Endothelial cell of umbilical vein (primary cell): ENCODE measurements at regions of chr5 and their contacts with region 1.

Region 1: DNA sequence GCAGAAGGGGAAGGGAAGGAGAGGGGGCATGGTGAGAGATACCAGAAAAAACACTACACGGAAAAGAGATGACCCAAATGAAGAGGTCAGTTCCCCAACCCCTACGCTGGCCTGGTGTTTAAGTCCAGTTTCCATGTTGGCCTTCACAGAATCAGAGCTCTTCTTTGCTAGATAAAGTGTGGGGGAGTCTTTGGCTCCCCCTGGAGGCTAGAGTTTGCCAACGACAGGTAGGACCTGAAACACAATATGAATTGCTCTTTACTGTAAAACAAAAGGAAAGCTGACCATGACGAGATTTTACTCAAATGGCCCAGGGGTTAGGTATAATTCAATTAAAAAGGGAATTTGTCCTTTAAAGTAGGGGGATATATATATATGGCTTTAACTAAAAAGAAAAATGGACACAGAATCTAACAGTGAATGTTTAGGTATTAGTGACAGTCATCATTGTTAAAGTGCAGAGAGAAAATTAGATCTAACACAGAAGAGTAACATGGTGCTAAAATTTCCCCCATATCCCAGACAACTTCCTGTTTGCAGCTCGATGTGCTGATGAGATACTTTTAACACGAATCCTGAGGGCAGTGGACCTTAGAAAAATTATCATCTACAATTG is 92.0 kb downstream of the SV2C start:
- DNase-seq: peak; percentile 68
- H3K4me3 ChIP-seq: no peak overlapping the region
- H3K27ac ChIP-seq: no peak overlapping the region
- H3K4me1 ChIP-seq: no peaks in the 10 kb centered on the region
- H3K27me3 ChIP-seq: peaks cover 0 to 2% of the 10 kb centered on the region in 2 experiments
- CTCF ChIP-seq: peak; percentile 79 to 85
- POLR2A ChIP-seq: no peak

Region 2: GRCh38 chr5:75717082-75717922 is 457.9 kb before region 1 on chr5 and contains the start of gene POC5:
- CTCF ChIA-PET with region 1: no interaction called
- POLR2A ChIA-PET with region 1: no interaction called
- dilution Hi-C with region 1: no loop called
- intact Hi-C with region 1: loop called (anchors 10 kb)
- DNase-seq: peak; percentile 98
- H3K4me3 ChIP-seq: peak within 1 kb of the TSS; percentile 49 to 88 (median 86)
- H3K27ac ChIP-seq: peak within 1 kb of the TSS; percentile 53
- H3K4me1 ChIP-seq: peaks cover 7% of the 10 kb centered on the region
- H3K27me3 ChIP-seq: peaks cover 8 to 9% of the 10 kb centered on the region in 2 experiments
- CTCF ChIP-seq: no peak
- POLR2A ChIP-seq: no peak
- total RNA-seq, gene POC5: 7.8 and 8.3 TPM in 2 replicates

Region 3: DNA sequence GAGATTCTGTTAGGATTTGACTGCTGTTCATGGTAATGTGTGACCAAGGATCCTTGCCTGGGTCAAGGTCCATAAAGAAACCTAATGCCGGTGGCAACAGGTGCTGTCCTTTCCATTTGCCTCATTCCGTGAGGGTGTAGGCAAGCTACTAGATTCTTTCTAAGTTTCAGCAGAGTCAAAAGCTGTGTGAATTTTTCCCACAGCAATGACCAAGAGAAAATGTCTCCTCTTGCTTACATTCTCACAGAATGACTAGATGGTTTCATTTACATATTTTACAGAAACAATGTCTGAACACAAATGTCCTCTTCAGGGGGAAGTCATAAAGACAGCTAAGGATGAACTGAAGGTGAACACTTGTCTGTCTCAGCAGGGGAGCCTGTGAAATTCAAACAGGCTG is 167.3 kb before region 1 on chr5:
- CTCF ChIA-PET with region 1: no interaction called
- POLR2A ChIA-PET with region 1: no interaction called
- dilution Hi-C with region 1: no loop called
- intact Hi-C with region 1: no loop called
- DNase-seq: no peak
- H3K4me3 ChIP-seq: no peak overlapping the region
- H3K27ac ChIP-seq: no peak overlapping the region
- H3K4me1 ChIP-seq: no peaks in the 10 kb centered on the region
- H3K27me3 ChIP-seq: no peaks in the 10 kb centered on the region
- CTCF ChIP-seq: no peak
- POLR2A ChIP-seq: no peak

Region 4: GRCh38 chr5:76041863-76042262 is 133.3 kb before region 1 on chr5:
- CTCF ChIA-PET with region 1: no interaction called
- POLR2A ChIA-PET with region 1: no interaction called
- dilution Hi-C with region 1: no loop called
- intact Hi-C with region 1: no loop called
- DNase-seq: no peak
- H3K4me3 ChIP-seq: no peak overlapping the region
- H3K27ac ChIP-seq: no peak overlapping the region
- H3K4me1 ChIP-seq: no peaks in the 10 kb centered on the region
- H3K27me3 ChIP-seq: no peaks in the 10 kb centered on the region
- CTCF ChIP-seq: no peak
- POLR2A ChIP-seq: no peak

Region 5: GRCh38 chr5:76074487-76075065 is 100.6 kb before region 1 on chr5:
- CTCF ChIA-PET with region 1: interaction called, 21 read pairs
- POLR2A ChIA-PET with region 1: no interaction called
- dilution Hi-C with region 1: no loop called
- intact Hi-C with region 1: loop called (anchors 1 kb)
- DNase-seq: peak; percentile 6
- H3K4me3 ChIP-seq: no peak overlapping the region
- H3K27ac ChIP-seq: no peak overlapping the region
- H3K4me1 ChIP-seq: no peaks in the 10 kb centered on the region
- H3K27me3 ChIP-seq: peaks cover 0 to 6% of the 10 kb centered on the region in 2 experiments
- CTCF ChIP-seq: peak in 1 of 2 donors; percentile 45
- POLR2A ChIP-seq: no peak

Region 6: DNA sequence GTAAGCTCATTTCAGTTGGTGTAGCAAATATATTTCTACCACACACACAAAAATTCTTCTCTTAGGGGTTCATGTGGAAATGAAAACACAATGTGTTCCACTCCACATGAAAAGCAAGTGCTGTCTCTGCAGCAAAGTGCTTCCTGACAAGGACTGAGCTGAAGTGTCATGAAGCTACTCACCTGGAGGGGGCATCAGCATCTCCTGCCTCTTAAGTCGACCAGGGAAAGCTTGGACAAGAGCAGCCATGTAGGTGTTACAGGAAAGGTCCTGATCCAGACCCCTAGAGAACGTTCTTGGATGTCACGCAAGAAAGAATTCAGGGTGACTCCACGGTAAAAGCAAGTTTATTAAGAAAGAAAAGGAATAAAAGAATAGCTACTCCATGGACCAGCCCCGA is 29.2 kb before region 1 on chr5:
- CTCF ChIA-PET with region 1: interaction called, 11 read pairs
- POLR2A ChIA-PET with region 1: no interaction called
- dilution Hi-C with region 1: no loop called
- intact Hi-C with region 1: no loop called
- DNase-seq: no peak
- H3K4me3 ChIP-seq: no peak overlapping the region
- H3K27ac ChIP-seq: no peak overlapping the region
- H3K4me1 ChIP-seq: no peaks in the 10 kb centered on the region
- H3K27me3 ChIP-seq: peaks cover 0 to 2% of the 10 kb centered on the region in 2 experiments
- CTCF ChIP-seq: peak in 1 of 2 donors; percentile 3
- POLR2A ChIP-seq: no peak

Region 7: GRCh38 chr5:76191826-76192490 is 16.8 kb after region 1 on chr5:
- CTCF ChIA-PET with region 1: interaction called, 15 read pairs
- POLR2A ChIA-PET with region 1: no interaction called
- dilution Hi-C with region 1: no loop called
- intact Hi-C with region 1: no loop called
- DNase-seq: no peak
- H3K4me3 ChIP-seq: no peak overlapping the region
- H3K27ac ChIP-seq: no peak overlapping the region
- H3K4me1 ChIP-seq: no peaks in the 10 kb centered on the region
- H3K27me3 ChIP-seq: no peaks in the 10 kb centered on the region
- CTCF ChIP-seq: no peak
- POLR2A ChIP-seq: no peak